Activated naive CD4-positive, alpha-beta T cell treated with anti-CD3 and anti-CD28 coated beads for 36 hours (primary cell): ENCODE measurements at regions of chr1 and their contacts with region 1.

Region 1: GRCh38 chr1:52056163-52056936 is at the start of gene BTF3L4:
- DNase-seq: peak; percentile 98
- H3K4me3 Mint-ChIP-seq: peak within 1 kb of the TSS; percentile 94
- H3K27ac Mint-ChIP-seq: peak within 1 kb of the TSS; percentile 98
- H3K4me1 Mint-ChIP-seq: peaks cover 40% of the 10 kb centered on the region
- H3K27me3 Mint-ChIP-seq: no peaks in the 10 kb centered on the region
- total RNA-seq, gene BTF3L4: 38.4 to 38.7 TPM

Region 2: DNA sequence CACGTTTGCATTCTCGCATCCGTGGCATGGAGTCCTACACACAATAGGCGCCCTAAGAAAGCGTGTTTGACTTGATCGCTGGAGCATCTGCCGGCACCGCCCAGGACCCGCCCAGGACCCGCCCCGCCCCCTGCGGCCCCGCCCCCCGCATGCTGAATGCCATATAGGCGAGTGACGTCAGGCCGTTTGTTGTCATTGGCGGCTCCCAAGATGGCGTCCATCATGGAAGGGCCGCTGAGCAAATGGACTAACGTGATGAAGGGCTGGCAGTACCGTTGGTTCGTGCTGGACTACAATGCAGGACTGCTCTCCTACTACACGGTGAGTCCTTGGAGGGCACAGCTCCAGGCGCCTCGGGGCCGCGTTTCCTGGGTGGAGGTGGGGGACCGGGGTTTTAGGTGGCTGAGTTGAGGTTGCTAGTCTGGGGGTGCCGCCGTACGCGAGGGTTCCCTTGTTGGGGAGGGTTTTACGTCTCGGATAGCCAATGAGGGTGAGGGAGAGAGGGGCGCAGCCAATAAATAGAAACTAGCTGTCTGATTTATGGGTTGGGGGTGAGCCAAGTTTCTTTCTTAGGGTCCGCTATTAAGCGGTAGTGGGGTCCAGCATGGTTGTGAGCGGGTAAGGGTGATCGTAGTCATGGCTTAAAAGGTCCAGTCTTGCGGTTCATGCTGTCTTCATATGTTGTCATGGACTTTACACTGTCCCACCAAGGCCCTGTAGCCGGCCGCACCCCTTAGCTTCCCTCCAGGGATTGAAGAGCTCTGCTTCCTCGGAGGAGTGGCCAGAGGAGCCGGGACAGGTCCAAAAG is 439.2 kb before region 1 on chr1 and contains the start of gene OSBPL9:
- CTCF ChIA-PET with region 1: no interaction called
- intact Hi-C with region 1: loop called (anchors 5 kb)
- DNase-seq: peak; percentile 94
- H3K4me3 Mint-ChIP-seq: peak within 1 kb of the TSS; percentile 98
- H3K27ac Mint-ChIP-seq: peak within 1 kb of the TSS; percentile 89
- H3K4me1 Mint-ChIP-seq: peaks cover 25% of the 10 kb centered on the region
- H3K27me3 Mint-ChIP-seq: no peaks in the 10 kb centered on the region
- total RNA-seq, gene OSBPL9: 38.2 to 40.7 TPM

Region 3: DNA sequence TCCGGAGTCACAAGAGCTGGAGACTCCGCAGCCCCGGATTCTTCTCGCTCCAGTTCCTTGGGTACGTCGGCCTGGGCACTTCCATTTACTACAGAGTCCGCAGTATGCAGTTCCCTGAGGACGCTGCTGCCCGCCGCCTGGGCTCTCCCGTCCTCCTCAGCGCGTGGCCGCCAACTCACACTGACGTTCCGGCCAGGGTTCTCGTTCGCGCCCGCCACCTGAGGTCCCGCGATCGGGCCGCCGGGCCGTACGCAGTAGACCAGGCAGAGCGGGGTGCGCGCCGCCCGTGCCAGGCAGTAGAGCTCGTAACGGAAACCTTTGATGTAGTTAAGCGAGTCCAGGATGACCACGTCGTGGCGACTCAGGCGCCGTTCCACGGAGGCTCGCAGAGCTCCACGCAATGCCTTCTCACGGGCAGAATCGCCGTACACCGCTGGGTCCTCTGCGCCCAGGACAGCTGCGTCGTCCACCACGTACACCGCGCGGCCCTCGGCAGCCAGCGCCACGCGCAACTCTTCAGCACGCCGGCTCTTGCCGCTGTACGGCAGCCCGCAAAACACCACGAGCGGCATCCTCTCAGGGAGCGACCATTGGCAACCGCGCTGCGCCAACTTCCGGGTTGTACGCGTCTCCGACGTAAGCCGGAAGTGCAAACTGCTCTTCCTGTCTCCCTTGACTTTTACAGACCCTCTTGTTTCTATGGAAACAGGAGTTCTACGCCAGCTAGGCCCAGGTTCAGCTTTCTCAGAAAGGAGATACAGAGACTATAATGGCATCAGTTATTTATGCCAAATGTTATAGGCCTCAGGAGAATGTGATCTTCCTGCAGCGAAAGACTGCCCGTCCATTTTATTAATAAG is 22.9 kb before region 1 on chr1 and contains the start of gene KTI12:
- CTCF ChIA-PET with region 1: no interaction called
- intact Hi-C with region 1: loop called (anchors 1 kb)
- DNase-seq: peak; percentile 93
- H3K4me3 Mint-ChIP-seq: peak within 1 kb of the TSS; percentile 90
- H3K27ac Mint-ChIP-seq: peak within 1 kb of the TSS; percentile 80
- H3K4me1 Mint-ChIP-seq: peaks cover 29% of the 10 kb centered on the region
- H3K27me3 Mint-ChIP-seq: no peaks in the 10 kb centered on the region
- total RNA-seq, gene KTI12: 7.3 to 7.6 TPM

Region 4: DNA sequence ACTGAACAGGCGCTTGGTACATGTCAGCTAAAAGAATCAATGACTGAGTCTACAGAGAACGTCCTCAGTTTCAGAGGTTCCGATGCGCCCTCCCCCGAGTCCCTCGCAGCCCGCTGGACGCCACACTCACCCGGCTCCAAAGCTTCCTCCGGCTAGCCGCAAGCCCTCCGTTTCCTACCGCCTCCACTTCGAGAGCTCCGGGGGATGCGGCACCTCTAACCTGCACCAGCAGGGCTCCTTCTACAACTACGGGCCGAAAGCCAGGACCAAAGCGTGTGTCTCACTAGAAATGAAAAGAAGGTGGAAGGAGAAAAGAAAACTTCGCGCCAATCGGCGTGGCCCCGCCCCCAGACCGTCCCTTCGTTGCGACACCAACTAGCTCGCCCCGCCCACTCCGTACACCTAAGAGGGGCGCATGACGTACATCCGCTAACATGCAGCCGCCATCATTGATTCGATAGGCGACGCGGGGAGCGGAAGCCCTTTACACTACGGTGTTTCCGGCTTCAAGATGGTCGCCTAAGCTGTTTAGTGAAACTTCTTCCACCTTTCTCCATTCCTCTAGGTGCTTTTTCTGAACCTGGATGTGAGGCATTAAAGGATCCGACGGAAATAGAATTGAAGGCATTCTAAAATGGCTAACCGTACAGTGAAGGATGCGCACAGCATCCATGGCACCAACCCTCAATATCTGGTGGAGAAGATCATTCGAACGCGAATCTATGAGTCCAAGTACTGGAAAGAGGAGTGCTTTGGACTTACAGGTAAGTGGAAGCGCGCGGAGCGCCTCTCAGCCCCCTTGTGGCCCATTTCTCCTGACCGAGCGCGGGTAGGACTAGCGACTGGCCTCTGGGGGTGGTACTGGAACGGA is 348.0 kb after region 1 on chr1 and contains the starts of genes ORC1 and PRPF38A:
- CTCF ChIA-PET with region 1: interaction called, 3 read pairs
- intact Hi-C with region 1: loop called (anchors 1 kb)
- DNase-seq: peak; percentile 99
- H3K4me3 Mint-ChIP-seq: peak within 1 kb of the TSS; percentile 100
- H3K27ac Mint-ChIP-seq: peak within 1 kb of the TSS; percentile 99
- H3K4me1 Mint-ChIP-seq: peaks cover 45% of the 10 kb centered on the region
- H3K27me3 Mint-ChIP-seq: no peaks in the 10 kb centered on the region
- total RNA-seq, gene ORC1: 46.9 to 49.3 TPM
- total RNA-seq, gene PRPF38A: 86.0 to 91.8 TPM

Region 5: DNA sequence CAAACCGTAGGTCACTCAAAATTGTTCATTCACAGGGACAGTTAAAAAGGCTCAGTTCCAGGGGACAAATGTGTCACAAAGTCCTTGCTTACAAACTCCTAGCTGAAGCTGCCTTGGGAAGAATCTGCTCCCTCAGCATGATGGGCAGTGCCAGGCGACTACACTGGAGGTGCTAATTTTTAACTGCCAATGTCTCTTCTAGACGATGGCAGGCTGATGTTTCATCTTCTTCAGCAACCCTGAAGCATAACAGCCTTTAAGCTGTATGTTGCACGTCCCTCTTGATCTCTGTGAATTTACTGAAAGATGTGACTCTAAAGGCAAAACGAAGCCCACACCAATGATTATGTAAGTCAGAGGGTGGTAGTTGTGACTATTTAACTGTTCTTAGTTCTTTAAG is 630.5 kb after region 1 on chr1:
- CTCF ChIA-PET with region 1: interaction called, 3 read pairs
- intact Hi-C with region 1: loop called (anchors 5 kb)
- DNase-seq: no peak
- H3K4me3 Mint-ChIP-seq: no peak overlapping the region
- H3K27ac Mint-ChIP-seq: no peak overlapping the region
- H3K4me1 Mint-ChIP-seq: peaks cover 9% of the 10 kb centered on the region
- H3K27me3 Mint-ChIP-seq: no peaks in the 10 kb centered on the region

Region 6: GRCh38 chr1:53014791-53015507 is 958.6 kb after region 1 on chr1:
- CTCF ChIA-PET with region 1: no interaction called
- intact Hi-C with region 1: loop called (anchors 1 kb)
- DNase-seq: peak; percentile 91
- H3K4me3 Mint-ChIP-seq: peak overlapping the region; percentile 78
- H3K27ac Mint-ChIP-seq: peak overlapping the region; percentile 60
- H3K4me1 Mint-ChIP-seq: peaks cover 20% of the 10 kb centered on the region
- H3K27me3 Mint-ChIP-seq: no peaks in the 10 kb centered on the region